Naive thymus-derived CD4-positive, alpha-beta T cell (primary cell): ENCODE measurements at regions of chr6 and their contacts with region 1.

Region 1: DNA sequence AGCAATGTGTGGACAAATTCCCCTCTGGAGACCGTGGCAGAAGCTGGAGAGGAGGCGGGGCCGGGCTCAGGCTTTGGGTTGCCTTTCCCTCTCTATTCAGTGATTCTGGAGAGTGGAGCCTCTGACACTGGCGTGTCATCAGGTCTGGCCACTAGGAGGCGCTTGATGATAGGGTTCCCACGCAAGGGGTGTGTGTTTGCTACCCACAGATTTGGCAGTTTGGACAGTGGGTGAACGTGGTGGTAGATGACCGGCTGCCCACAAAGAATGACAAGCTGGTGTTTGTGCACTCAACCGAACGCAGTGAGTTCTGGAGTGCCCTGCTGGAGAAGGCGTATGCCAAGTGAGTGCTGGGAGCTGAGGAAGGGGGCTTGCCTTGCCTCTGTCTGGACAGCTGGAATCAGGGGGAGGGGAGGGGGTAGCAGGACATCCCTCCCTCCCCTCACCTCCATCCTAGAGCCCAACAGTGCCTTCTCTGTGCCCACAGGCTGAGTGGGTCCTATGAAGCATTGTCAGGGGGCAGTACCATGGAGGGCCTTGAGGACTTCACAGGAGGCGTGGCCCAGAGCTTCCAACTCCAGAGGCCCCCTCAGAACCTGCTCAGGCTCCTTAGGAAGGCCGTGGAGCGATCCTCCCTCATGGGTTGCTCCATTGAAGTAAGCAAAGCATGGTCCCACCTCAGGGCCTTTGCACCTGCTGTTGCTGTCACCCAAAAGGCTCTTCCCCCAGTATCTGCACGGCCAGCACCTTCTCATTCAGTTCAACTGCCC is 14.3 kb downstream of the CAPN11 start:
- DNase-seq: peak; percentile 40 to 80 (median 62)
- ATAC-seq: peak; percentile 88
- H3K4me3 ChIP-seq: no peak overlapping the region
- H3K4me3 Mint-ChIP-seq: peak overlapping the region in 1 of 10 donors; percentile 60
- H3K27ac ChIP-seq: no peak overlapping the region
- H3K27ac Mint-ChIP-seq: no peak overlapping the region
- H3K4me1 ChIP-seq: no peaks in the 10 kb centered on the region
- H3K4me1 Mint-ChIP-seq: peaks cover 0 to 18% (median 13%) of the 10 kb centered on the region in 7 donors
- H3K27me3 ChIP-seq: no peaks in the 10 kb centered on the region
- H3K27me3 Mint-ChIP-seq: peaks cover 0 to 10% (median 4%) of the 10 kb centered on the region in 5 donors

Region 2: DNA sequence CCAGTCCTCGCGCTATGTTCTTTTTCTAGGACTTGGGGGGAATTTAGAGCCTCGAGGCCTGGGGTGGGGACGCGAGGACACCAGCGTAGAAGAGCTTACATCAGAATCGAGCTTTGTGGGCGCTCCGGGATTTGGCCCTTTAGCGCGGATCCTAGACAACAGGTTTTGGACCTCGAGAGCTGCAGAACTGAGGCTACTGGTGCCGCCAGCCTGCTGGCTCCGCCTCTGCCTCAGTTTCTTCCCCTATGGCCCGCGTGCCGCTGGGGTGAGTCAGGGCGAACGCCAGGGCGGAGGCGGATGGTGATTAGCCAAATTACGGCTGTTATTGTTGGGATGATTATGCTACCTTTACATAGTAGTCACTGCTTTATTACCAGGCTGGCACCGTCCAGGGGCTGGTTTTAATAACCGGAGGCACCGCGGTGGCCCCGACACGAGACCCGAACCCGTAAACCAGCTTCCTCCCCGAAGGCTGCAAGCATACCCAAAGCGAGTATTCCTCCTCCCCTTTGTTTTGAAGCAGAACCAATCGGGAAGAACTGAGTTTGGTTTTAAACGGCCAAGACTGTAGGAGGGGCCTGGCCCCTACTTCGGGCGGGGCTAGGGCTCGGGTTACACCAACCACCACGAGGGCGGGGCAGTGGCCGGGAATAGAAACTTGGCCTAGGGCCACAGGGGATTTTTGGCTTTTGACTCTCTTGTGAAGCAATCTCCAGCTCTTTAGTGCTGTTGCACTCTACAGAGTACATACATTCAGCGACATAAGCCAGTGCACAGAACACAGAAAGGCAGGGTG is 543.2 kb before region 1 on chr6:
- CTCF ChIA-PET with region 1: no interaction called
- POLR2A ChIA-PET with region 1: no interaction called
- intact Hi-C with region 1: no loop called
- DNase-seq: peak; percentile 64 to 90 (median 75)
- ATAC-seq: peak; percentile 79
- H3K4me3 ChIP-seq: peak overlapping the region; percentile 98
- H3K4me3 Mint-ChIP-seq: peak overlapping the region; percentile 97 to 100 (median 99)
- H3K27ac ChIP-seq: peak overlapping the region; percentile 76
- H3K27ac Mint-ChIP-seq: peak overlapping the region; percentile 90 to 99 (median 98)
- H3K4me1 ChIP-seq: peaks cover 9 to 11% of the 10 kb centered on the region in 2 donors
- H3K4me1 Mint-ChIP-seq: peaks cover 30 to 42% (median 38%) of the 10 kb centered on the region in 7 donors
- H3K27me3 ChIP-seq: no peaks in the 10 kb centered on the region
- H3K27me3 Mint-ChIP-seq: no peaks in the 10 kb centered on the region

Region 3: GRCh38 chr6:44237813-44238433 is 65.0 kb after region 1 on chr6:
- CTCF ChIA-PET with region 1: interaction called, 13 read pairs
- POLR2A ChIA-PET with region 1: no interaction called
- intact Hi-C with region 1: loop called (anchors 1 kb)
- DNase-seq: peak; percentile 62 to 87 (median 80)
- ATAC-seq: peak; percentile 94
- H3K4me3 ChIP-seq: peak overlapping the region; percentile 93
- H3K4me3 Mint-ChIP-seq: peak overlapping the region; percentile 82 to 92 (median 90)
- H3K27ac ChIP-seq: peak overlapping the region; percentile 83
- H3K27ac Mint-ChIP-seq: peak overlapping the region; percentile 38 to 98 (median 89)
- H3K4me1 ChIP-seq: peaks cover 5 to 7% of the 10 kb centered on the region in 2 donors
- H3K4me1 Mint-ChIP-seq: peaks cover 0 to 28% (median 11%) of the 10 kb centered on the region in 7 donors
- H3K27me3 ChIP-seq: no peaks in the 10 kb centered on the region
- H3K27me3 Mint-ChIP-seq: no peaks in the 10 kb centered on the region

Region 4: GRCh38 chr6:44257025-44257752 is 84.3 kb after region 1 on chr6 and contains the start of gene SLC35B2:
- CTCF ChIA-PET with region 1: interaction called, 5 read pairs
- POLR2A ChIA-PET with region 1: interaction called, 3 read pairs
- intact Hi-C with region 1: loop called (anchors 1 kb)
- DNase-seq: peak; percentile 53 to 83 (median 69)
- ATAC-seq: peak; percentile 87
- H3K4me3 ChIP-seq: peak within 1 kb of the TSS; percentile 74
- H3K4me3 Mint-ChIP-seq: peak within 1 kb of the TSS; percentile 80 to 94 (median 92)
- H3K27ac ChIP-seq: peak within 1 kb of the TSS; percentile 87
- H3K27ac Mint-ChIP-seq: peak within 1 kb of the TSS; percentile 75 to 97 (median 89)
- H3K4me1 ChIP-seq: peaks cover 14 to 18% of the 10 kb centered on the region in 2 donors
- H3K4me1 Mint-ChIP-seq: peaks cover 21 to 64% (median 60%) of the 10 kb centered on the region in 7 donors
- H3K27me3 ChIP-seq: no peaks in the 10 kb centered on the region
- H3K27me3 Mint-ChIP-seq: no peaks in the 10 kb centered on the region
- total RNA-seq, gene SLC35B2: 10.0 to 32.1 (median 17.6) TPM

Region 5: DNA sequence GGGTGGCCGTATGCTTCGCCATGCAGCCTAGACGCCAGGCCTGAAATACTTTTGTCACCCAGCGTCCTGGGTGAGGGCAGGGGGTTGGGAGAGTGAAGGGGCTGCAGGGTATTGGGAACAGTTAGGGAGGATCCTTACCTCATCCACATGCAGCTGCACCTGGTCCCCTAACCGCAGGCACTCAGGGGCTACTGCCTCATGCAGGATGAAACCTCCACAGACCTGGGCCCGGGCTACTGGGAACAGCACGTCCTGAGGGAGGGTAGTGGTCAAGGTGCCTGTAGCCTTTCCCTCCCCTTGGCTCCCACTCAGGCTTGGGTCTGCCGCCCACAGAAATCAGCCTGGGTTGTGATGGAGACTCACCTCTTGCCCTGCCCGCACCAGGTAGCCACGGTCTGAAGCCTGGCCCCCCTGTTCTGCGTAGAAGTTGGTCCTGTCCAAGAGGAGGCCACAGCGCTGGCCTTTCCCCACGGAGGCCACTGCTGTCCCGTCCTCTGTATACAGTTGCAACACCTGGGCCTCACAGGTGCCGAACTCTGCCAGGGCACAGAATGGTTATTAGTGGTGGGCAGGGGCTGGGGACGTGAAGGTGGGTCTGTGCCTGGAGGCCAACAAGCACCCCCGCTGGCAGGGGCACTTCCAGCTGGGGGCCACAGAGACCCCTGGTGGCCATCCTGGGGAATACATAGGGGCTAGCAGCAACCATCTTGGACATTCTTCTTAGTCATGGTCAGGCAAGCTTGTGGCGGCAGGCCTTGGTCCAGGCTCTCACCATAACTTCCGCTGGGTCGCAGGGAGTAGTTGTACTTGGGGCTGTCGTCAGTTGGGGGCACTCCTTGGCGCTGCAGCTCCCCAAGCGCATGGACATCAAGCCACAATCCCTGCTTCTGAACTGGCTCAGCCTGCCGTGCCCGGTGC is 131.6 kb after region 1 on chr6:
- CTCF ChIA-PET with region 1: interaction called, 3 read pairs
- POLR2A ChIA-PET with region 1: no interaction called
- intact Hi-C with region 1: loop called in 1 of 2 experiments (anchors 1 kb)
- DNase-seq: peak in 7 of 9 donors; percentile 13 to 53 (median 27)
- ATAC-seq: peak; percentile 80
- H3K4me3 ChIP-seq: no peak overlapping the region
- H3K4me3 Mint-ChIP-seq: no peak overlapping the region
- H3K27ac ChIP-seq: no peak overlapping the region
- H3K27ac Mint-ChIP-seq: peak overlapping the region in 1 of 9 donors; percentile 38
- H3K4me1 ChIP-seq: no peaks in the 10 kb centered on the region
- H3K4me1 Mint-ChIP-seq: peaks cover 0 to 4% (median 0%) of the 10 kb centered on the region in 7 donors
- H3K27me3 ChIP-seq: no peaks in the 10 kb centered on the region
- H3K27me3 Mint-ChIP-seq: no peaks in the 10 kb centered on the region

Region 6: DNA sequence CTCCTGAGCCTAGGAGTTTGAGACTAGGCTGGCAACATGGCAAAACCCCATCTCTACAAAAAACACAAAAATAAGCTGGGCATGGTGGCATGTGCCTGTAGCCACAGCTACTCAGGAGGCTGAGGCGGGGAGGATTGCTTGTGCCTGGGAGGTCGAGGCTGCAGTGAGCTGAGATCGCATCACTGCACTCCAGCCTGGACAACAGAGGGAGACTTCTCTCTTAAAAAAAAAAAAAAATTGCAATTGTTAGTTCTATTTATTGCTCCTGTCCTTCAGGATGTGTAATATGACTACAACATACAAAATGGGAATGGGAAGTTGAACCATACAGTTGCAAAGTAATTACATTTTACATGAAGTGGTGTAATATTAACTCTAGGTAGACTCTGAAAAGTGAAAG is 148.3 kb after region 1 on chr6:
- CTCF ChIA-PET with region 1: no interaction called
- POLR2A ChIA-PET with region 1: no interaction called
- intact Hi-C with region 1: loop called in 1 of 2 experiments (anchors 5 kb)
- DNase-seq: no peak
- ATAC-seq: no peak
- H3K4me3 ChIP-seq: no peak overlapping the region
- H3K4me3 Mint-ChIP-seq: no peak overlapping the region
- H3K27ac ChIP-seq: no peak overlapping the region
- H3K27ac Mint-ChIP-seq: no peak overlapping the region
- H3K4me1 ChIP-seq: no peaks in the 10 kb centered on the region
- H3K4me1 Mint-ChIP-seq: no peaks in the 10 kb centered on the region
- H3K27me3 ChIP-seq: no peaks in the 10 kb centered on the region
- H3K27me3 Mint-ChIP-seq: peaks cover 22 to 43% (median 29%) of the 10 kb centered on the region in 5 donors

Region 7: GRCh38 chr6:44338228-44339122 is 165.6 kb after region 1 on chr6:
- CTCF ChIA-PET with region 1: interaction called, 9 read pairs
- POLR2A ChIA-PET with region 1: no interaction called
- intact Hi-C with region 1: loop called in 1 of 2 experiments (anchors 1 kb)
- DNase-seq: peak; percentile 43 to 67 (median 62)
- ATAC-seq: peak; percentile 92
- H3K4me3 ChIP-seq: no peak overlapping the region
- H3K4me3 Mint-ChIP-seq: no peak overlapping the region
- H3K27ac ChIP-seq: no peak overlapping the region
- H3K27ac Mint-ChIP-seq: no peak overlapping the region
- H3K4me1 ChIP-seq: no peaks in the 10 kb centered on the region
- H3K4me1 Mint-ChIP-seq: peaks cover 0 to 4% (median 0%) of the 10 kb centered on the region in 7 donors
- H3K27me3 ChIP-seq: no peaks in the 10 kb centered on the region
- H3K27me3 Mint-ChIP-seq: peaks cover 18 to 33% (median 24%) of the 10 kb centered on the region in 5 donors